Dorsolateral prefrontal cortex (tissue), 120 donors: ENCODE measurements at regions of chr15 and their contacts with region 1.

Region 1: DNA sequence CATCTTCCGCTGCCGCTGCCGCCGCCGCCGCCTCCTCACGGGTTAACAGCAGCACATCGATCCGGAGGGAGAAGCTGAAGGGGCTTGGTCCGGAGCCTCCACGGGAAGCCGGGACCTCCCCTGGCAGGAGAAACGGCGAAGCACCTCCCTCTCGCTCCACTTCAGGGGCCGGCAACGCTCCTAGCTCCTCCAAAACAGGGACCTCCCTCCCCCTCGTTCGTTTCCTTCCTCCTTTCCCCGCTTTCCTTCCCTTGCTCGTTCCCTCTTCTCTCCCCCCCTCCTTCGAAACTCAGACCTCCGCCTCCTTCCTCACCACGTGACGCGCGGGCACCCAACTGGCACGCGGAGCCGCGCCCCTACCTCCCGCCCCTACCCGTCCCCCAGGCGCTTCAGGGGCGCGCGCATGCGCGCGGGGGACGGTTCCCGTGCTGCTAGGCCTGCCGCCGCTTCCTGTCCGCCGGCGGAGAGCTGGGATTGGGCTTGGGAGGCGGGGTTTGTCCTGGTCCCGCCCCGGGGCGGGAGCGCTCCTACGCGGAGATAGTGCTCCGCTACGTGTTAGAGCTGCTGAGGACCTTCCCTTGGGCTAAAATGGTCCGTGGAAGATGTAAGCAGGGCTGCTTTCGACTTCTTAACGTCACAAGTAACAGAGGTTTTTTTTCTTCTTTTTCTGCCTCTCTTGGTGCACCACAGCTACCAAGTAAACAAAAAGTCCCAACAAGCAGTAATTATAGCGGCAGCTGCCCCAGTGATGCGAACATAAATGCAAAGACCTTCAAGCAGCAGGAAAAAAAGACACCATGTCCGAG is at the start of gene ADAM10:
- DNase-seq: peak; percentile 96 to 100 (median 99)
- H3K4me3 ChIP-seq: peak within 1 kb of the TSS; percentile 67 to 98 (median 88)
- H3K27ac ChIP-seq: peak within 1 kb of the TSS; percentile 90 to 100 (median 97)
- H3K27me3 ChIP-seq: no peaks in the 10 kb centered on the region
- CTCF ChIP-seq: peak in 19 of 56 donors; percentile 1 to 54 (median 24)
- total RNA-seq, gene ADAM10: 85.4 to 177 (median 116) TPM

Region 2: DNA sequence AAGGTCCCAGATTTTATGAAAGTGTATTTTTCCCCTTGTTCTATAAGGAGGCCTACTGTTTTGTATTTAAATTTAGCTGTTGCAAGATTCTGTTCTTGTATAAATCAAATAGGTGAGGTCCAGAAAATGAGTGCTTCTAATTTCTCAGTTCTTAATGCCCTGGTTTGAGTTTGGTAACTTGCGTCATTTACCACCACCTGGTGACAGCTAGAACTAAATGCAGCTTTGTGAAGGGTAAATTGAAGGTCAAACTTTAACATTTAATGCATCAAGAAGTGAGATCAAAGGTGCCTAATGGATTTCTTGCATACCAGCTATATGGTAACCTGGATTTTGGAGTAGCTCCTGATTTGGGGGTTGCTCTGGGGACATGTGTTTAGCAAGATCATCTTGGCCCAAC is 1093.9 kb before region 1 on chr15:
- intact Hi-C with region 1: no loop called
- DNase-seq: no peak
- H3K4me3 ChIP-seq: no peak overlapping the region
- H3K27ac ChIP-seq: no peak overlapping the region
- H3K27me3 ChIP-seq: no peaks in the 10 kb centered on the region
- CTCF ChIP-seq: peak in 35 of 56 donors; percentile 6 to 63 (median 27)

Region 3: GRCh38 chr15:58407376-58407775 is 342.4 kb before region 1 on chr15:
- intact Hi-C with region 1: loop called in 1 of 2 experiments (anchors 5 kb)
- DNase-seq: peak in 5 of 10 donors; percentile 16 to 74 (median 47)
- H3K4me3 ChIP-seq: peak overlapping the region in 2 of 59 donors; percentile 3 to 11
- H3K27ac ChIP-seq: peak overlapping the region in 39 of 59 donors; percentile 2 to 80 (median 53)
- H3K27me3 ChIP-seq: no peaks in the 10 kb centered on the region
- CTCF ChIP-seq: peak in 13 of 56 donors; percentile 11 to 54 (median 23)

Region 4: GRCh38 chr15:58528188-58528870 is 221.4 kb before region 1 on chr15:
- intact Hi-C with region 1: loop called in 1 of 2 experiments (anchors 5 kb)
- DNase-seq: no peak
- H3K4me3 ChIP-seq: no peak overlapping the region
- H3K27ac ChIP-seq: no peak overlapping the region
- H3K27me3 ChIP-seq: no peaks in the 10 kb centered on the region
- CTCF ChIP-seq: no peak

Region 5: GRCh38 chr15:58666957-58667356 is 82.8 kb before region 1 on chr15:
- intact Hi-C with region 1: loop called in 1 of 2 experiments (anchors 5 kb)
- DNase-seq: no peak
- H3K4me3 ChIP-seq: peak overlapping the region in 7 of 59 donors; percentile 6 to 33 (median 14)
- H3K27ac ChIP-seq: peak overlapping the region; percentile 40 to 98 (median 91)
- H3K27me3 ChIP-seq: no peaks in the 10 kb centered on the region
- CTCF ChIP-seq: peak in 4 of 56 donors; percentile 2 to 34 (median 16)

Region 6: DNA sequence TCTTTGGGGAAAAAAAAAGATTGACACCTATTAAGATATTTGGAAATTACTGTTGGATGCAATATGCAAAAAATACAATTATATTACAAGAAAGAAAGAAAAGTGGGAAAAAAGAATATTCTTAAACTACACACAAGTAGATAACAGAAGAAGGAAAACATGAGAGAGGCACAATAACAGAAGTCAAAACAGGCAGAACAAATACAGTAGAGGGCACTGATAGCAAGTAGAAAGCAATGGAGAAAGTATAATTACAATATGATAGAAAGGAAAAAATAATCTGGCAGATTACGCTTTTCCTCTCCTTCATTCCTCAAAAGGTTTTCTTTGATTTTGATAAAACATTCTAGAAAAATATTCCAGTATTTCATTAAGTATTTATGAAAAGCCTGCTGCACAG is 72.3 kb before region 1 on chr15:
- intact Hi-C with region 1: loop called in 1 of 2 experiments (anchors 5 kb)
- DNase-seq: no peak
- H3K4me3 ChIP-seq: peak overlapping the region in 11 of 59 donors; percentile 1 to 39 (median 17)
- H3K27ac ChIP-seq: peak overlapping the region in 49 of 59 donors; percentile 0 to 81 (median 62)
- H3K27me3 ChIP-seq: no peaks in the 10 kb centered on the region
- CTCF ChIP-seq: peak in 52 of 56 donors; percentile 8 to 79 (median 45)

Region 7: GRCh38 chr15:58690703-58691102 is 59.0 kb before region 1 on chr15:
- intact Hi-C with region 1: loop called in 1 of 2 experiments (anchors 5 kb)
- DNase-seq: no peak
- H3K4me3 ChIP-seq: no peak overlapping the region
- H3K27ac ChIP-seq: peak overlapping the region in 33 of 59 donors; percentile 3 to 62 (median 30)
- H3K27me3 ChIP-seq: no peaks in the 10 kb centered on the region
- CTCF ChIP-seq: no peak

Region 8: GRCh38 chr15:58770857-58771620 is 21.3 kb after region 1 on chr15 and contains the start of gene MINDY2:
- intact Hi-C with region 1: loop called (anchors 1 kb)
- DNase-seq: peak; percentile 96 to 99 (median 98)
- H3K4me3 ChIP-seq: peak within 1 kb of the TSS; percentile 67 to 99 (median 95)
- H3K27ac ChIP-seq: peak within 1 kb of the TSS; percentile 91 to 100 (median 99)
- H3K27me3 ChIP-seq: no peaks in the 10 kb centered on the region
- CTCF ChIP-seq: peak in 47 of 56 donors; percentile 4 to 68 (median 35)
- total RNA-seq, gene MINDY2: 28.6 to 56.4 (median 40.0) TPM